Activated naive CD4-positive, alpha-beta T cell treated with anti-CD3 and anti-CD28 coated beads for 36 hours (primary cell): ENCODE measurements at regions of chr16 and their contacts with region 1.

Region 1: DNA sequence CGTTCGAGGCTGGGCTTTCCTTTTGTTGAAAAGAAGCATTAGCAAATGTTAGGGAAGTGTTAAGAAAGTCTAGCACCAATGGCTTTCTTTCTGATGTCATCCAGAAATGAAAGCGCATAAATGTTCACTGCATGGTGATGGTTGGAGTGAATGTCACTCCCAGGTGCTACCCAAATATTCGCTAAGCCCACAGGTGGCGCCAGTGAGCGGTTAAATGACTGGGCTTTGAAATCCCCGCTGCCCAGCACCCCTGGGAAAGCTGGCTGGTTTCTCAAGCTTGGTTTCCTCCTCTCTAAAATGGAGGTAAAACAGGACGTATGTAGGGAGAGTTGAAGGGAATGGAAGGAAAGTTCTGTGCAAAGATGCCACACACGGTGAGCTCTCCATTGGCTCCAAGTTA is 104.4 kb downstream of the IRX5 start:
- DNase-seq: peak; percentile 55
- H3K4me3 Mint-ChIP-seq: no peak overlapping the region
- H3K27ac Mint-ChIP-seq: no peak overlapping the region
- H3K4me1 Mint-ChIP-seq: no peaks in the 10 kb centered on the region
- H3K27me3 Mint-ChIP-seq: peaks cover 7% of the 10 kb centered on the region

Region 2: DNA sequence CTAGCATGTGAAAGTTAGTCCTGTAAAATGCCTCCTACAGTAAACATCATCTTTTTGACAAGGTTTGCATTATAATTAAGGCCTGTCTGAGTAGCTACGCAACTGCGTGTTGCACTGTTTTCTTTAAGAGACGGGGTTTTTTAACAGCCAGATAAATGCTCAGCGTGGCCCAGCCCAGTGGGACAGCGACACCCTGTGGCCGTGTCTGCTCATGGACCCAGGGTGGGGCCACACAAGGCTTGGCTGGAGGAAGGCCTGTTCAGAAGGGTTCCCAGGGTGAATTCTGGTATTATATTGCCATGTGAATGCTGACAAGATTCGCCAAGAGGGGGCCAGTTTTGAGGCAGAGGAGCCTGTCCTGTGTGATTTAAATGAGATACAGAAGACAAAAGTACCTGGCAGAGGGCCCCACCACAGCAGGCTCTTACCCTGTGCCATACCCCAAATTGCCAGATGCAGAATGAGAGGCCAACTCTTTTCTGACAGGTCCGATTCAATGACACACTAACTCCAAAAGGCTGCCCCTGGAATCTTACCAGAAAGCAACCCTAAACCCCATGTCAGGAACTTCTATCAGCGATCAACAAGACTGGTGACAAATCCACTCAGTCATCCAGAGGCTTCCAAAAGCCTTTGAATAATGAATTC is 223.1 kb after region 1 on chr16:
- CTCF ChIA-PET with region 1: interaction called, 3 read pairs
- intact Hi-C with region 1: loop called (anchors 2 kb)
- DNase-seq: peak; percentile 69
- H3K4me3 Mint-ChIP-seq: no peak overlapping the region
- H3K27ac Mint-ChIP-seq: no peak overlapping the region
- H3K4me1 Mint-ChIP-seq: peaks cover 2% of the 10 kb centered on the region
- H3K27me3 Mint-ChIP-seq: peaks cover 11% of the 10 kb centered on the region

Region 3: DNA sequence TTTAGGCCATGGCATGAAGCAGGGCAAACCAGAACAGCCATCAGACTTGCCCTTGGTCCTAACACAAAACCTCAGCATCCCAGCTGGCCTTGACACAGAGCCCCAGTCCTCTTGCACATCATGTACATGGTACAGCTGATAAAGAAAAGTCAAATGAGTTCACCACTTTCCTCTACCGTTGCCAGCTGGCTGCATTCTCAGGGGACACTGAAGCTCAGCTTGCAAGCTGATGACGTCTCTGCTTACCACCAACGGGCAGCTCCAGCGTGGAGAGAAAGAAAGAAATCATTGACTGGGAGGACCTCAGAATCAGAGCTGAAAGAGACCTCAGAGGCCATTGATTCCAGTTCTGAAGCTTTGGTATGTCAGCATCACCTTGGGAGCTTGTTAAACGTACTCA is 920.8 kb after region 1 on chr16:
- CTCF ChIA-PET with region 1: no interaction called
- intact Hi-C with region 1: no loop called
- DNase-seq: no peak
- H3K4me3 Mint-ChIP-seq: no peak overlapping the region
- H3K27ac Mint-ChIP-seq: no peak overlapping the region
- H3K4me1 Mint-ChIP-seq: no peaks in the 10 kb centered on the region
- H3K27me3 Mint-ChIP-seq: peaks cover 8% of the 10 kb centered on the region